T-cell (primary cell): ENCODE measurements at regions of chr9 and their contacts with region 1.

Region 1: DNA sequence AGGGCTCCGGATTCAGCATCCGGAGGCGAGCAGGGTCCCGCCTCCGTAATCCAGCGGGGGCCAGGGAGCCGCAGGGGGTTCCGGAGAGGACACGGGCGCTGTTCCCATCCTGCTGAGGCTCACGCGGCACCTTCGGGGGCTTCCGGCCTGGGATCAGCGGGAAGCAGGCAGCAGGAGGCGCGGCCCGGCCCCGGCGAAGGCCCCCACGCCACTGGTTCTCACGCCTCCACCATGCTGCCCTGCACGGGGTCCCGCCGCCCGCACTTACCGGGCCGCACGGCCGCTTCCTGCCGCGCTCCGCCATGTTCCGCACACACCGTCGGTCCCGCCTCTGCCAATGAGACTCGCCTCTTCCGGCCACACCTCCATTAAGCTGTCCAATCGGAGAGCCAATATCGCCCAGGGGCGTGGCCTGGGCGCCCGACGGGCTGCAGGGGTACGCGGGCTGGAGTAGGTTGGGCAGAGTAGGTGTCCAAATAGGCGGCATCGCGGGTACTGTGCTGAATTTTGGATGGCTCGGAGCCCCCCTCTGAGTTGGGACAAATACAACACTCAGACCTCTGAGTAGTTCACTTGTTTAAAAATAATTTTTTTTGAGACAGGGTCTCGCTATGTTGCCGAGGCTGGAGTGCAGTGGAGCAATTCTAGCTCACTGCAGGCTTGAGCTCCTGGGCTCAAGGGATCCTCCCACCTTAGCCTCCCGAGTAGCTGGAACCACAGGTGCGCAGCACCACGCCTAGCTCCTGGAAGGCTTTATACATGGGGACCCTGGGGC is at the start of gene SPOUT1:
- DNase-seq: peak; percentile 84 to 95 (median 91)
- ATAC-seq: peak; percentile 98
- H3K4me3 ChIP-seq: peak within 1 kb of the TSS; percentile 78 to 88
- H3K4me3 Mint-ChIP-seq: peak within 1 kb of the TSS; percentile 88 to 96 (median 90)
- H3K27ac ChIP-seq: peak within 1 kb of the TSS; percentile 54
- H3K27ac Mint-ChIP-seq: peak within 1 kb of the TSS; percentile 94
- H3K4me1 ChIP-seq: peaks cover 0 to 21% of the 10 kb centered on the region in 2 experiments
- H3K4me1 Mint-ChIP-seq: peaks cover 18 to 26% (median 19%) of the 10 kb centered on the region in 3 donors
- H3K27me3 ChIP-seq: no peaks in the 10 kb centered on the region
- H3K27me3 Mint-ChIP-seq: no peaks in the 10 kb centered on the region
- total RNA-seq, gene SPOUT1: 43.7 to 89.4 (median 82.6) TPM

Region 2: GRCh38 chr9:128818099-128818838 is 11.4 kb before region 1 on chr9 and contains the start of gene ENDOG:
- CTCF ChIA-PET with region 1: interaction called, 5 to 26 read pairs
- POLR2A ChIA-PET with region 1: interaction called, 3 to 8 read pairs
- DNase-seq: peak; percentile 89 to 98 (median 95)
- ATAC-seq: peak; percentile 92 to 96 (median 92)
- H3K4me3 ChIP-seq: peak within 1 kb of the TSS; percentile 66 to 72
- H3K4me3 Mint-ChIP-seq: peak within 1 kb of the TSS; percentile 81 to 85 (median 83)
- H3K27ac ChIP-seq: peak within 1 kb of the TSS; percentile 67
- H3K27ac Mint-ChIP-seq: peak within 1 kb of the TSS; percentile 80 to 88
- H3K4me1 ChIP-seq: peaks cover 0 to 27% of the 10 kb centered on the region in 2 experiments
- H3K4me1 Mint-ChIP-seq: peaks cover 13 to 25% (median 25%) of the 10 kb centered on the region in 3 donors
- H3K27me3 ChIP-seq: peaks cover 0 to 2% of the 10 kb centered on the region in 2 experiments
- H3K27me3 Mint-ChIP-seq: no peaks in the 10 kb centered on the region
- total RNA-seq, gene ENDOG: 11.3 to 31.1 (median 25.1) TPM

Region 3: DNA sequence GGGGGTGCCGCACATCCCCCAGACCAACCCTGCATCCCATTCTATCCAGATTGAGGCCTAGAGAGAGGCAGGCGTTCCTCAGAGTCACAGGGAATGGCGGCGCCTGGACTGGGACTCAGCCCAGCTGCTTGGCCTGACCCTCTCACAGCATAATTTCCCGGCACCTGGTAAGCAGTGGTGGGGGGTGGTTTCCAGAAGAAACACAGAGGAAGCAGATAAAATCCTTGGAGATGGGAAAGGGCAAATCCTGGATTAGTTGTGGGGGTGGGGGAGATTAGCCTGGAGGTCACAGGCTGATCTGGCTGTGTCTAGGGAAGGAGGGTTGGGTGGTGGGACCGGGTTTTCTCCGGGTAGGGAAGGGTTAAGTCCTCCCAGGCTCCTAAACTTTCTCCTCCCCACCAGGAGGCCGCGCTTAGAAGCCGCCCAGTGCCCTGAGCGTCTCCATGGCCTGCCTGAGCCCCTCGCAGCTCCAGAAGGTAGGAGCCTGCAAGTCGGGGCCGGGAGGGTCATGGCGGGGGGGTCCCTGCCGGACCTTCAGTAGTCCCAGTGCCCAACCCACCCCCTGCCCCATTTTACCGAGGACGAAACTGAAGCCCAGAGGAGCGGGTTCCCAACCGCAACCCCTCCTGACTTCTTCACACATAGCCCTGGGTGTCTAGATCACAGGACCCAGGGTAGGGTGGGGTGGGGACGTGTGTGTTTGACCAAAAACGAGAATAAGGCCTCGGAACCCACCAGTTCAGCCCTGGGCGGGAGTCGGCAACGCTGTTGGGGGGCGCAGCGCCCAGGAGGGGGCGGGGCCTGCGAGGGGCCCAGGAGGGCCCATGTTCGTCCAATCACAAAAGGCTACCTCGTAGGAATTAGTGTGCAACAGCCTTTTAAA is 92.5 kb after region 1 on chr9:
- CTCF ChIA-PET with region 1: no interaction called
- POLR2A ChIA-PET with region 1: interaction called, 6 to 10 read pairs
- DNase-seq: peak in 4 of 35 experiments; percentile 7 to 25 (median 19)
- ATAC-seq: peak; percentile 55 to 67 (median 60)
- H3K4me3 ChIP-seq: peak overlapping the region; percentile 12 to 15
- H3K4me3 Mint-ChIP-seq: peak overlapping the region; percentile 24 to 44 (median 36)
- H3K27ac ChIP-seq: peak overlapping the region; percentile 12
- H3K27ac Mint-ChIP-seq: no peak overlapping the region
- H3K4me1 ChIP-seq: peaks cover 6 to 19% of the 10 kb centered on the region in 2 experiments
- H3K4me1 Mint-ChIP-seq: peaks cover 5 to 20% (median 11%) of the 10 kb centered on the region in 3 donors
- H3K27me3 ChIP-seq: peaks cover 0 to 8% of the 10 kb centered on the region in 2 experiments
- H3K27me3 Mint-ChIP-seq: no peaks in the 10 kb centered on the region